ENCODE measurements at regions of chr1 and their contacts with region 1.

Region 1: GRCh38 chr1:246155923-246156322 is 351.2 kb downstream of the SMYD3 start:
- DNase-seq: peak; percentile 76
- ATAC-seq: peak; percentile 87
- H3K4me3 ChIP-seq: peak overlapping the region; percentile 41
- H3K27ac ChIP-seq: peak overlapping the region; percentile 82
- H3K4me1 ChIP-seq: peaks cover 26% of the 10 kb centered on the region
- H3K27me3 ChIP-seq: no peaks in the 10 kb centered on the region
- CTCF ChIP-seq: no peak

Region 2: GRCh38 chr1:246139745-246140182 is 16.2 kb before region 1 on chr1:
- CTCF ChIA-PET with region 1: no interaction called
- POLR2A ChIA-PET with region 1: interaction called, 8 read pairs
- intact Hi-C with region 1: loop called (anchors 1 kb)
- DNase-seq: peak; percentile 97
- ATAC-seq: peak; percentile 78
- H3K4me3 ChIP-seq: peak overlapping the region; percentile 21; the same call in 1 of the 2 replicates
- H3K27ac ChIP-seq: peak overlapping the region; percentile 96
- H3K4me1 ChIP-seq: peaks cover 52% of the 10 kb centered on the region
- H3K27me3 ChIP-seq: no peaks in the 10 kb centered on the region
- CTCF ChIP-seq: no peak

Region 3: DNA sequence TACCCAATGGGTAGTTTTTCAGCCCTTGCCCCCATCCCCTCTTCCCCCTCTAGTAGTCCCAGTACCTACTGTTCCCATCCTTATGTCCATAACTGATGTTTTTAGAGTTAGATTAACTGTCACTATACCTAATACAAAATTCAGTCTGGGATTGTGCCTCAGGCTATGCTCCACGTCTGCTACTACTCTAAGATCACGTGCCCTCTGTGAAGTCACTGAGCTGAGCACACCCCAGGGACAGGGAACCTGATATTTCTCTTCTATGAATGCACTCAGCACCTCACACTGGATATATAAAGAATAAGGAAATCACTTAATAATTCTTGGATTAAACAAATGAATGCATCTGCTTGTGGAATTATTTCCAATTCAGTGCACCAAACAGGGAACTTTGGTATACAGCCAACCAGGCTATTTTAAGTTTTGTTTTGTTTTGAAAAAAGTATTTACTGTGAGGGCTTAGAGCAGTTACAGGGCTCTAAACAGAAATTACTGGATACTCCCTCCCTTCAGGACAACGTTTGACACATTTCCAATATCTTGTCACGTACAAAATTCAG is 43.2 kb after region 1 on chr1:
- CTCF ChIA-PET with region 1: no interaction called
- POLR2A ChIA-PET with region 1: interaction called, 10 read pairs
- intact Hi-C with region 1: no loop called
- DNase-seq: no peak
- ATAC-seq: no peak
- H3K4me3 ChIP-seq: no peak overlapping the region
- H3K27ac ChIP-seq: no peak overlapping the region
- H3K4me1 ChIP-seq: no peaks in the 10 kb centered on the region
- H3K27me3 ChIP-seq: no peaks in the 10 kb centered on the region
- CTCF ChIP-seq: no peak

Region 4: DNA sequence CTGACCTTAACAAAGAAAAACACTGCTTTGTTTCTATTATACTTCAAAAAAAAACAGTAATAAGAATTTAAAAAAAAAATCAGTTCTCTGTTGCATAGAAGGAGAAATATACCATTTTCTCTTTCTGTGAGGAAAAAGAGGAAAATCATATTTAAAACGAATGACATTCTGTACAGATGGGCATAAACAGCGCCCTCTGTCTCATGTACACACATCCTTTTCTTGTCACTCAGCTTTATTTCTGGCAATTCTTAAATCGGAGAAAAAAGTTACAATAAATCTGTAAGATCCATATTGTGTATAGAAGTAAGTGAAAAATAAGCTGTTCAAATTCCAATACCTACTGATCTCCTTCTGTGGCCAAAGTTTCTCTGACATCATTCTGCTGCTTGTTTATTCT is 105.7 kb after region 1 on chr1:
- CTCF ChIA-PET with region 1: no interaction called
- POLR2A ChIA-PET with region 1: no interaction called
- intact Hi-C with region 1: loop called (anchors 5 kb)
- DNase-seq: peak; percentile 14
- ATAC-seq: peak; percentile 8; the same call in 1 of the 2 replicates
- H3K4me3 ChIP-seq: 0 out of 2 replicates have a peak overlapping the region, but pooled peaks have one; percentile 2
- H3K27ac ChIP-seq: peak overlapping the region; percentile 59
- H3K4me1 ChIP-seq: peaks cover 15% of the 10 kb centered on the region
- H3K27me3 ChIP-seq: no peaks in the 10 kb centered on the region
- CTCF ChIP-seq: peak; percentile 73

Region 5: DNA sequence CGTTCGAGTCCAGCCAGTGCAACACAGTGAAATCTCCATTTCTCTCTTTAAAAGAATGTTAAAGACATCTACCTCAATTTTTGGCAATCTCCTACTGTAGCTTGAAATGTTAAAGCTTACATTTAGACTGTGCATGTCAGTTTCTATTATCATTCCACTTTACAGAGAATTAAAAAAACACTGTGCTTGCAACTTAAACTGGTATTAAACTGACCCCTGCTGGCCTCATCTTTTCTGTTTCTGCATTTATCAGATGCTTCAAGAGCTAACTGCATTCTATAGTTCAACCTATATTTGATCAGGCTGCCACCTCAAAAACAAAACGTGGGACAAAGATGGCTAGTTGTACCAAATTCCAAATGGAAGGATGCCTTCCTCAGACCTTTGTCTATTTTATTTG is 124.6 kb after region 1 on chr1:
- CTCF ChIA-PET with region 1: interaction called, 3 read pairs
- POLR2A ChIA-PET with region 1: no interaction called
- intact Hi-C with region 1: loop called (anchors 2 kb)
- DNase-seq: peak; percentile 44
- ATAC-seq: peak; percentile 17; the same call in 1 of the 2 replicates
- H3K4me3 ChIP-seq: no peak overlapping the region
- H3K27ac ChIP-seq: peak overlapping the region; percentile 54
- H3K4me1 ChIP-seq: peaks cover 23% of the 10 kb centered on the region
- H3K27me3 ChIP-seq: no peaks in the 10 kb centered on the region
- CTCF ChIP-seq: peak; percentile 67